PC-9 (cell line): ENCODE measurements at regions of chr12 and their contacts with region 1.

Region 1: DNA sequence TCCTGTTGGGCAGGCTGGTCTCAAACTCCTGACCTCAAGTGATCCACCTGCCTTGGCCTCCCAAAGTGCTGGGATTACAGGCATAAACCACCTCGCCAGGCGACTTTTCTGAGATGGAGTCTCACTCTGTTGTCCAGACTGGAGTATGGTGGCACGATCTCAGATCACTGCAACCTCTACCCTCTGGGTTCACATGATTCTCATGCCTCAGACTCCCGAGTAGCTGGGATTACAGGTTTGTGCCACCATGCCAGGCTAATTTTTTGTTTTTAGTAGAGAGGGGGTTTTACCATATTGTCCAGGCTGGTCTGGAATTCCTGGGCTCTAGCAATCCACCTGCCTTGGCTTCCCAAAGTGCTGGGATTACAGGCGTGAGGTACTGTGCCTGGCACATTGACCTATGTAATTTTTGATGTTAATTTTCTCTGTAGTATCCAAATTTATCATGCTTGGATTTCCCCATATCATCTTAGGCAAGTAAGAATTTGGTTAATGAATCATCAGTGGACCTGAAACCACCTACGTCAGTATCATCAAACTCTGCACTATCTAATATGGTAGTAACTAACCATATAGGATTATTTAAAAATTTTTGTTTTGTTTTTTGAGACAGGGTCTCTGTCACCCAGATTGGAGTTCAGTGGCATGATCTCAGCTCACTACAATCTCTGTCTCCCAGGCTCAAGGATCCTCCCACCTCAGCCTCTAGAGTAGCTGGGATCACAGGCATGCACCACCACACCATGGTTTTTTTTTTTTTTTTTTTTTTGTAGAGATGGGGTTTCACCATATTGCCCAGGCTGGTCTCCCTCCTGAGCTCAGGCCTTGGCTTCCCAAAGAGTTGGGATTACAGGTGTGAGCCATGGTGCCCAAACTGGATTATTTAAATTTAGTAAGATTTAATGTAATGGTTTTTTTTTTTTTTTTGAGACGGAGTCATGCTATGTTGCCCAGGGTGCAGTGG is 11.9 kb upstream of the ATP5F1B start:
- DNase-seq: no peak
- H3K4me3 ChIP-seq: no peak overlapping the region
- H3K27ac ChIP-seq: no peak overlapping the region
- H3K4me1 ChIP-seq: peaks cover 31% of the 10 kb centered on the region
- H3K27me3 ChIP-seq: no peaks in the 10 kb centered on the region
- CTCF ChIP-seq: no peak

Region 2: DNA sequence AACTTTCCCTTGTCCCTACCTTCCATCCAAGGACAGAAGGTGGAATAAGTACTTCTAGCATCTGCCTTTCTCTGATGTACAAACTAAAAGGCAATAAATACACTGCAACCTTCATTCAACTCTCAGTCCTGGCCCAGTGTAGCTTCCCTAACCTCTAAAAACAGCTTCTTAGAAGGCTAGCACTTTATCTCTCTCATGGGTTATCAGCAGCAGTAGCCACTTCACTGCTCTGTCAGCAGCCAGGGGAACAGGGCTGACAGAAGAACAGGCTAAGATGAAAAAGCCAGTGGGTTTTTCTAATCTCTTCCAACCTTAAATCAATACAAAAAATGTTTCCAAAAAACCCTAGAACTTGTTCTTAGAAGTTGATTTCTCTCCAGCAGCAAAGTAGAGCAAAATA is 40.8 kb before region 1 on chr12:
- CTCF ChIA-PET with region 1: no interaction called
- POLR2A ChIA-PET with region 1: no interaction called
- intact Hi-C with region 1: no loop called
- DNase-seq: no peak
- H3K4me3 ChIP-seq: no peak overlapping the region
- H3K27ac ChIP-seq: no peak overlapping the region
- H3K4me1 ChIP-seq: no peaks in the 10 kb centered on the region
- H3K27me3 ChIP-seq: no peaks in the 10 kb centered on the region
- CTCF ChIP-seq: no peak

Region 3: GRCh38 chr12:56630160-56630632 is 27.5 kb before region 1 on chr12 and contains the start of gene BAZ2A:
- CTCF ChIA-PET with region 1: no interaction called
- POLR2A ChIA-PET with region 1: interaction called, 18 read pairs
- intact Hi-C with region 1: no loop called
- DNase-seq: peak; percentile 61 to 75
- H3K4me3 ChIP-seq: peak within 1 kb of the TSS; percentile 96
- H3K27ac ChIP-seq: peak within 1 kb of the TSS; percentile 35
- H3K4me1 ChIP-seq: peaks cover 43% of the 10 kb centered on the region
- H3K27me3 ChIP-seq: no peaks in the 10 kb centered on the region
- CTCF ChIP-seq: no peak
- total RNA-seq, gene BAZ2A: 99.5 and 115 TPM in 2 replicates

Region 4: DNA sequence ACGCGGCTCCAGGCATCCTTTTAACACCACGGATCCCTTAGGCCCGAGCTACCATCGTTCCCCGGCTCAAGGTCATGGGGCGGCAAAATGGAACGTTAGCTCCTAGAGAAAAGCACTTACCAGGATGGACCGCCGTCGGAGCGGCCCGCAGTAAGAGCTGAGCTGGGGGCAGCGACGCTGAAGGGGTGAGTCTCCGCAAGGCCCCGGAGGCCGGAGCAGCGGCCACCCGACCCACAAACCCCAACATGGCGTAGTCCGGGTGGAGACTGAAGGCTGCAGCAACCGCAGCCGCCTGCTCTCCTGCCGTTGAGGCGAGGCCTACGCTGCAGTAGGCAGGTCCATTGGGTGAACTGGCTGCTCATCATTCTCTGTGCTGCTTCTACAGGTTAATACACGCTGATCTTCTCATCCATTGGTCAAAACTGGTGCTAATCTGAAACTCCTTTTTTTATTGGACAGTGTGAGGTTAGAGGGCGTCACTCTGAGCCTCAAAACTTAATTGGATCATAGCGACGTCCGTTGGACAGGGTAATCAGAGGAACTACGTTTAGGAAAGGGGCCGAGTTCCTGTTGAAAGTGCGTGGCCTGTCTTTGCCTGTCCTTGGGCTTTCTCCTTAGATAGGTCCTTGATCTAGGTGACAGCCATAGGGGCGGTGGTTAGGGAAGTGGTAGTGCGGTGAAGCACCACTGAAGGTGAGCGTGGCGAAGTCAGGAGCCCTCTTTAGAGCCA is 11.8 kb before region 1 on chr12 and contains the start of gene ATP5F1B:
- CTCF ChIA-PET with region 1: no interaction called
- POLR2A ChIA-PET with region 1: interaction called, 20 read pairs
- intact Hi-C with region 1: loop called (anchors 1 kb)
- DNase-seq: peak; percentile 94 to 99
- H3K4me3 ChIP-seq: peak within 1 kb of the TSS; percentile 94
- H3K27ac ChIP-seq: peak within 1 kb of the TSS; percentile 61
- H3K4me1 ChIP-seq: peaks cover 18% of the 10 kb centered on the region
- H3K27me3 ChIP-seq: no peaks in the 10 kb centered on the region
- CTCF ChIP-seq: no peak
- total RNA-seq, gene ATP5F1B: 506 and 587 TPM in 2 replicates

Region 5: DNA sequence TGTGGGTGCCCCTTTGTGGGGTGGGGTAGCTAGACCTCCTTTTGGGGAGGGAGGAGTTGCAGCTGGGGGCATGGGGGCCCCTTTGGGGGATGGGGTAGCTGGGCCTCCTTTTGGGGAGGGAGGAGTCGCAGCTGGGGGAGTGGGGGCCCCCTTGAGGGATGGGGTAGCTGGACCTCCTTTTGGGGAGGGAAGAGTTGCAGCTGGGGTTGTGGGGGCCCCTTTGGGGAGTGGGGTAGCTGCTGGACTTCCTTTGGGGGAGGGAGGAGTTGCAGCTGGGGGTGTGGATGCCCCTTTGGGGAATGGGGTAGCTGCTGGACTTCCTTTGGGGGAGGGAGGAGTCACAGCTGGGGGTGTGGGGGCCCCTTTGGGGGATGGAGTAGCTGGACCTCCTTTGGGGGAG is 60.5 kb after region 1 on chr12:
- CTCF ChIA-PET with region 1: no interaction called
- POLR2A ChIA-PET with region 1: interaction called, 31 read pairs
- intact Hi-C with region 1: loop called (anchors 10 kb)
- DNase-seq: no peak
- H3K4me3 ChIP-seq: no peak overlapping the region
- H3K27ac ChIP-seq: no peak overlapping the region
- H3K4me1 ChIP-seq: peaks cover 46% of the 10 kb centered on the region
- H3K27me3 ChIP-seq: no peaks in the 10 kb centered on the region
- CTCF ChIP-seq: no peak

Region 6: GRCh38 chr12:56724972-56725722 is 67.4 kb after region 1 on chr12 and contains the start of gene NACA:
- CTCF ChIA-PET with region 1: no interaction called
- POLR2A ChIA-PET with region 1: interaction called, 9 read pairs
- intact Hi-C with region 1: loop called (anchors 10 kb)
- DNase-seq: peak; percentile 94 to 95
- H3K4me3 ChIP-seq: peak within 1 kb of the TSS; percentile 99
- H3K27ac ChIP-seq: peak within 1 kb of the TSS; percentile 94
- H3K4me1 ChIP-seq: peaks cover 39% of the 10 kb centered on the region
- H3K27me3 ChIP-seq: no peaks in the 10 kb centered on the region
- CTCF ChIP-seq: no peak
- total RNA-seq, gene NACA: 812 and 1,035 TPM in 2 replicates

Region 7: DNA sequence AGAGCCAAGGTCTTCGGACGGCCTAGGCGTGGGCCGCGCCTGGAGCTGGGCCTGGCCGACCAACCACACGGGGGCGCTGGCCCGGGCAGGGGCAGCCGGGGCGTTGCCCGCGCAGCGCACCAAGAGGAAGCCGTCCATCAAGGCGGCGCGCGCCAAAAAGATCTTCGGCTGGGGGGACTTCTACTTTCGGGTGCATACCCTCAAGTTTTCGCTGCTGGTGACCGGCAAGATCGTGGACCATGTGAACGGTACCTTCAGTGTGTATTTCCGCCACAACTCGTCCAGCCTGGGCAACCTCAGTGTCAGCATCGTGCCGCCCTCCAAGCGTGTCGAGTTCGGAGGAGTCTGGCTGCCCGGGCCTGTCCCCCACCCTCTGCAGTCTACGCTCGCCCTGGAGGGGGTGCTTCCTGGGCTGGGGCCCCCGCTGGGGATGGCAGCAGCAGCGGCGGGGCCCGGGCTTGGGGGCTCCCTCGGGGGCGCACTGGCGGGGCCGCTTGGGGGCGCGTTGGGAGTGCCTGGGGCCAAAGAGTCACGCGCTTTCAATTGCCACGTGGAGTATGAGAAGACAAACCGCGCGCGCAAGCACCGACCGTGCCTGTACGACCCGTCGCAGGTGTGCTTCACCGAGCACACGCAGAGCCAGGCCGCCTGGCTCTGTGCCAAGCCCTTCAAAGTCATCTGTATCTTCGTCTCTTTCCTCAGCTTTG is 567.4 kb after region 1 on chr12:
- CTCF ChIA-PET with region 1: no interaction called
- POLR2A ChIA-PET with region 1: no interaction called
- intact Hi-C with region 1: no loop called
- DNase-seq: no peak
- H3K4me3 ChIP-seq: no peak overlapping the region
- H3K27ac ChIP-seq: no peak overlapping the region
- H3K4me1 ChIP-seq: peaks cover 19% of the 10 kb centered on the region
- H3K27me3 ChIP-seq: no peaks in the 10 kb centered on the region
- CTCF ChIP-seq: no peak

Region 8: DNA sequence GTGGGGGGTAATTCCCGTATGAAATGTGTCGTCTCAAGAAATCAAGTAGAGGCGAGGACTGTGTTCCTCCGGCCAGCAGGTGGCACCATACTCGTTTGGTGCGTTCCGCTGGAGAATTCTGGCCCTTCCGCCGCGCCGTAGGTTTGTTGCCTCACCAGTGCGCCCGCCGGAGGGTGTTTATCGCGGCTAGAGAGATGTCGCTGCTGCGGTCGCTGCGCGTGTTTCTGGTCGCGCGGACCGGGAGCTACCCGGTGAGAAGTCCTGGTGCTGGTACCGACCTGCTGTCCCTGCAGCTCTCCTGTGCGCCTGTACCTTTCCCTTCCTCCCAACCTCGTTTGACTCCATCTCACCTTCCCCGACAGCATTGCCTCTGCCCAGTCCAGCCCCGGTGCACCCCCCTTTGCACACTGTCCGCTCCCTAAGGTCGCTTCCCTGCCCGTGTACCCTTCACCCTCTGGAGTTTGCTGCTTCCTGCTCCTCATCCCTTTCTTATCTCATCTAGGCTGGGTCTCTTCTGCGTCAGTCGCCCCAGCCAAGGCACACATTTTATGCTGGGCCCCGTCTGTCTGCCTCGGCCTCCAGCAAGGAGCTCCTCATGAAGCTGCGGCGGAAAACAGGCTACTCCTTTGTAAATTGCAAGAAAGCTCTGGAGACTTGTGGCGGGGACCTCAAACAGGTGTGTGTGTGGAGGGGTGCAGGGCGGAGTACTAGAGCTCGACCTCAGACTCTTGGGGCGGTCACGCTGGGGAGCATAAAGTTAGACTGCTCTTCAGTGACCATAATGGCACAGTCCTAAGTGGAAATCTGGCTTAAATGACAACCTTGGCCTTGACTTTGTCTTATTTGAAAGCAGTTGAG is 1125.1 kb after region 1 on chr12 and contains the start of gene TSFM:
- CTCF ChIA-PET with region 1: interaction called, 15 read pairs
- POLR2A ChIA-PET with region 1: no interaction called
- intact Hi-C with region 1: no loop called
- DNase-seq: peak; percentile 81 to 91
- H3K4me3 ChIP-seq: peak within 1 kb of the TSS; percentile 96
- H3K27ac ChIP-seq: no peak within 1 kb of the TSS
- H3K4me1 ChIP-seq: peaks cover 8% of the 10 kb centered on the region
- H3K27me3 ChIP-seq: no peaks in the 10 kb centered on the region
- CTCF ChIP-seq: peak; percentile 91
- total RNA-seq, gene TSFM: 38.1 and 44.8 TPM in 2 replicates